A549 (cell line): ENCODE measurements at regions of chr3 and their contacts with region 1.

Region 1: DNA sequence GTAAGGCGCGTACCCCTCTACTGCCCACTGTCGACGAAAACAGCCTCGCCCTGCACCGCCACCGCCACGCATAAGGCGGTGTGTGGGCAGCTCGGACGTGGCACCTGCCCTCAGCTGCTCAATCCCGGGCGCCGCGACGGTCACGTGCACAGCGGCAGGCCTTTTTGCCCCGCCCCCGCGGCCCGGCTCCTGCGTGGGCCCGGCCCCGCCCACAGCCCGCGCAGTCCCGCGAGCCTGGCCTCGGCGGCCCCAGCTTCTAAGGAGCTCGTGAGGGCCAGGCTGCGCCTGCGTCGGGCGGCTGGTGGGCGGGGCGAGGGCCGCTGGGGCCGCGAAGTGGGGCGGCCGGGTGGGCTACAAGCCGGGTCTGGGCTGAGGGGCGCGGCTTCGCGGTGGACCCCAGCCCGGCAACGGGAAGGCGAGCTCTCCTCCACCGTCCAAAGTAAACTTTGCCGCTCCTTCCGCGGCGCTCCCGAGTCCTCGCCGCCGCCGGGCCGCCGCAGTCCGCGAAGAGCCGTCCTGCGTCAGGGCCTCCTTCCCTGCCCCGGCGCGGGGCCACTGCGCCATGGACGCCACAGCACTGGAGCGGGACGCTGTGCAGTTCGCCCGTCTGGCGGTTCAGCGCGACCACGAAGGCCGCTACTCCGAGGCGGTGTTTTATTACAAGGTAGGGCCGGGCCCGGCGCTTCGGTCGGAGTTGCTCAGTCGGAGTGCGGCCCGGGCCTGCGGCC is at the start of gene CAPN7:
- DNase-seq: peak; percentile 87 to 93
- ATAC-seq: peak; percentile 89 to 96
- H3K4me3 ChIP-seq: peak within 1 kb of the TSS; percentile 87
- H3K27ac ChIP-seq: peak within 1 kb of the TSS; percentile 92 to 94
- H3K4me1 ChIP-seq: peaks cover 19% of the 10 kb centered on the region
- CTCF ChIP-seq: peak; percentile 30; the same call in 1 of the 3 replicates
- EP300 ChIP-seq: no peak
- POLR2A ChIP-seq: peak; percentile 83
- RAD21 ChIP-seq: no peak
- polyA plus RNA-seq, gene CAPN7: 31.1 and 36.8 TPM in 2 replicates

Region 2: DNA sequence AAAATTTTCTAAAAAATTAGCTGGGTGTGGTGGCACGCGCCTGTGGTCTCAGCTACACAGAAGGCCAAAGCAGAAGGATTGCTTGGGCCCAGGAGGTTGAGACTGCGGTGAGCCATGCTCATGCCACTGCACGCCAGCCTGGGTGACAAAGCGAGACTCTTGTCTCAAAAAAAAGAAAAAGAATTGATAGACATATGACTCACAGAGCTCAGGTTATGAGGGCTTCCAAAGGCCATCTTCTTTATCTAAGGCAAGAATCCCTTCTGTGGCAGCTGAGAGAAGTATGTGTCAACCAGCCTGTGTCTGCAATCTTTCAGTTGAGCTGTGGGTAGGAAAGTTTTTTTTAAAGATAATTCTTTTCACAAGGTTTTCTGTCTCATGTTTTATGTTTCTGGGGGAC is 194.9 kb before region 1 on chr3:
- CTCF ChIA-PET with region 1: no interaction called
- POLR2A ChIA-PET with region 1: no interaction called
- DNase-seq: no peak
- ATAC-seq: no peak; a peak in 1 of 6 replicates
- H3K4me3 ChIP-seq: no peak overlapping the region
- H3K27ac ChIP-seq: no peak overlapping the region
- H3K4me1 ChIP-seq: no peaks in the 10 kb centered on the region
- CTCF ChIP-seq: no peak
- EP300 ChIP-seq: no peak
- POLR2A ChIP-seq: no peak
- RAD21 ChIP-seq: no peak

Region 3: DNA sequence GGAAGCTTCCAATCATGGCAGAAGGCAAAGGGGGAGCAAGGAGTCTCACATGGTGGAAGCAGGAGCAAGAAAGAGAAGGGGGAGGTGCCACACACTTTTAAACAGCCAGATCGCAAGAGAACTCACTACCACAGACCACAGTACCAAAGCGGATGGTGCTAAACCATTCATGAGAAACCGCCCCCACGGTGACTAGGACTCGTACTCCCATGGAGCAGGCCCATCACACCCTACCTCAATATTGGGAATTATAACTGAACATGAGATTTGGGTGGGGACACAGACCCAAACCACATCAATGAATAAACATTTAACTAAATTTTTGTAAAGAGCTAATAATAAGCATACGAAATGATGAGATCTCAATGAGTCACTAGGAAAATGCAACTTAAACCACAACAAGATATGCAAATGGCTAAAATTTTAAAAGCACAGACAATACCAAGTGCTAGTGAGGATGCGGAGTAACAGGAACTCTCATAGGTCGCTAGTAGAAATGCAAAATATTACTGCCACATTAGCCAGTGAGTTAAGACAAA is 151.0 kb before region 1 on chr3:
- CTCF ChIA-PET with region 1: no interaction called
- POLR2A ChIA-PET with region 1: no interaction called
- DNase-seq: no peak
- ATAC-seq: no peak
- H3K4me3 ChIP-seq: no peak overlapping the region
- H3K27ac ChIP-seq: no peak overlapping the region
- H3K4me1 ChIP-seq: no peaks in the 10 kb centered on the region
- CTCF ChIP-seq: no peak
- EP300 ChIP-seq: no peak
- POLR2A ChIP-seq: no peak
- RAD21 ChIP-seq: no peak

Region 4: GRCh38 chr3:15108082-15108545 is 98.0 kb before region 1 on chr3:
- CTCF ChIA-PET with region 1: interaction called, 42 read pairs
- POLR2A ChIA-PET with region 1: no interaction called
- DNase-seq: peak; percentile 83 to 96
- ATAC-seq: peak; percentile 92 to 98
- H3K4me3 ChIP-seq: no peak overlapping the region
- H3K27ac ChIP-seq: no peak overlapping the region
- H3K4me1 ChIP-seq: no peaks in the 10 kb centered on the region
- CTCF ChIP-seq: peak; percentile 88
- EP300 ChIP-seq: no peak
- POLR2A ChIP-seq: no peak
- RAD21 ChIP-seq: peak; percentile 84

Region 5: GRCh38 chr3:15120986-15121385 is 85.1 kb before region 1 on chr3:
- CTCF ChIA-PET with region 1: interaction called, 25 read pairs
- POLR2A ChIA-PET with region 1: interaction called, 4 read pairs
- DNase-seq: no peak
- ATAC-seq: no peak
- H3K4me3 ChIP-seq: no peak overlapping the region
- H3K27ac ChIP-seq: no peak overlapping the region
- H3K4me1 ChIP-seq: 0 out of 3 replicates have a peak, but pooled peaks cover 4% of the 10 kb centered on the region
- CTCF ChIP-seq: no peak
- EP300 ChIP-seq: no peak
- POLR2A ChIP-seq: no peak
- RAD21 ChIP-seq: no peak

Region 6: DNA sequence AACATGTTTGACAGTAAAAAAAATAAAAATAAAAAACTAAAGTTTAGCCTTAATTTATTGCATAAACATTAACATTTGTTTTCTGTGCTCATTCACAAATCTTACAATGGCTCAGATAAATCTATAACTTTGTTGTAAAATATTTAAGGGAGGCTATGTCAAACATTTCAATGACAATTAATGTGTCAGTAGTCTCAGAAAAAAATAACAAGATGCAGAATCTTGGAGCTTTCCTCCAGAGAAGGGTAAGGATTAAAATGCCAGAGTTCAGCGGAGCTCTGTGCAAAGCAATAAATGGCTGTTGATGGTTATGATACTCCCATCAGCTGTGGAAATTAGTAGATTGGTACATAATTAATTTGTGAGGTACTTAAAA is 20.0 kb before region 1 on chr3:
- CTCF ChIA-PET with region 1: interaction called, 13 read pairs
- POLR2A ChIA-PET with region 1: no interaction called
- DNase-seq: no peak
- ATAC-seq: no peak
- H3K4me3 ChIP-seq: peak overlapping the region; percentile 55
- H3K27ac ChIP-seq: peak overlapping the region in 1 of 2 experiments; percentile 73; a peak in 1 of 6 replicates
- H3K4me1 ChIP-seq: no peaks in the 10 kb centered on the region
- CTCF ChIP-seq: no peak
- EP300 ChIP-seq: no peak
- POLR2A ChIP-seq: no peak
- RAD21 ChIP-seq: no peak

Region 7: DNA sequence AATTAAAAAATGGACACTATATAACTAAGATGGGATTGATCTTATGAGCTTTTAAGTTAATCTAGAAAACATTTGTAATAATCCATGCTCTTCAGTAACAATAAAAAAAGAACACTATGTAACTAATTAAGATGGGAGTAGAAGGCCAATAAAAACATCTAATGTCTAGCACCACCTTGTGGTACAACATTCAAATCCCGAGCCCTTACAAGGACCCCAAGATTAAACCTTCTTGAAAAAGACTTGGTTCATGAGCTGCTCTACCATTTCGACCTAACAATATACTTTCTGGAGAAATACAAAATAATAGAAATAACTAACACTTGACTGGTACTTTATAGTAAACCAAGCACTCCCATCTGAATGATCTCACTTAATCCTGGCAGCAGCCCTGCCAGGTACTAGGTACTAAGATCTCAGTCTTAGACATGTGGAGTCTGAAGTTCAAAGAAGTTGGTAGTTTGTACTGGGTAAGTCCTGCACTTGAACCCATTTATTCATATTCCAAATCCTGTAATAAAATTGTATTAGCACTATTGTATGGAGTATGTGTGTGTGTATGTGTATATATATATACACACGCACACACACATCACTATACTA is 199.5 kb after region 1 on chr3:
- CTCF ChIA-PET with region 1: interaction called, 35 read pairs
- POLR2A ChIA-PET with region 1: no interaction called
- DNase-seq: peak; percentile 69 to 71
- ATAC-seq: peak; percentile 73 to 90; a peak in 5 of 6 replicates
- H3K4me3 ChIP-seq: no peak overlapping the region
- H3K27ac ChIP-seq: no peak overlapping the region
- H3K4me1 ChIP-seq: no peaks in the 10 kb centered on the region
- CTCF ChIP-seq: peak; percentile 78
- EP300 ChIP-seq: no peak
- POLR2A ChIP-seq: no peak
- RAD21 ChIP-seq: peak; percentile 62 to 68

Region 8: DNA sequence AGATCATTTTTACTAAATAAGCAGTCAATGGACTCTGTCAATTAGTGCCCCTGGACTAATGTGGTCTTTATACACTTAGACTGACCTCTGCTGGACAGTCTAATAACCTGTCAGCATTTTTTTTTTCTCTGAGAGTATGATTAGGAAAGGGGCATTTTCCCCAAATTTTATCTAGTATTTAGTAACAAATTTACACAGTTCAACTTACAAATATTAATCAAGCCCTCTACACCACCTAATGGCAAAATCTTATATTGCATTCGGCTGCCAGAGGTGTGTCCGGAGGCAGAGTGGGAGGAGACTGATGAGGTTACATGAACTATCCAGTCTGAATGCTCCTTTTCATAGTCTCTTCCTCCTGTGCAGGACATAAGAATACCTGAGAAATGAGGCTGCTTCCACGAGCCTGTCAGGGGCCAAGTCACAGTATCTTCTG is 351.4 kb after region 1 on chr3:
- CTCF ChIA-PET with region 1: interaction called, 12 read pairs
- POLR2A ChIA-PET with region 1: no interaction called
- DNase-seq: peak; percentile 28 to 81
- ATAC-seq: peak; percentile 96 to 99
- H3K4me3 ChIP-seq: no peak overlapping the region
- H3K27ac ChIP-seq: 0 out of 6 replicates have a peak overlapping the region, but pooled peaks of 1 of the 2 experiments have one; percentile 38
- H3K4me1 ChIP-seq: peaks cover 6% of the 10 kb centered on the region; the same call in 1 of the 3 replicates
- CTCF ChIP-seq: peak; percentile 69
- EP300 ChIP-seq: no peak
- POLR2A ChIP-seq: no peak
- RAD21 ChIP-seq: peak; percentile 48 to 59